Caco-2 (cell line): ENCODE measurements at regions of chr11 and their contacts with region 1.

Region 1: GRCh38 chr11:89625171-89625570 is 84.9 kb upstream of the TRIM77 start:
- DNase-seq: peak in 1 of 2 experiments; percentile 21
- H3K4me3 ChIP-seq: no peak overlapping the region
- H3K4me3 Mint-ChIP-seq: no peak overlapping the region
- H3K27ac Mint-ChIP-seq: no peak overlapping the region
- H3K4me1 ChIP-seq: no peaks in the 10 kb centered on the region
- H3K4me1 Mint-ChIP-seq: no peaks in the 10 kb centered on the region
- H3K27me3 ChIP-seq: no peaks in the 10 kb centered on the region
- H3K27me3 Mint-ChIP-seq: peaks cover 2% of the 10 kb centered on the region
- CTCF ChIP-seq: peak; percentile 39 to 50

Region 2: GRCh38 chr11:89458716-89459115 is 166.5 kb before region 1 on chr11:
- CTCF ChIA-PET with region 1: no interaction called
- POLR2A ChIA-PET with region 1: no interaction called
- intact Hi-C with region 1: no loop called
- DNase-seq: no peak
- H3K4me3 ChIP-seq: no peak overlapping the region
- H3K4me3 Mint-ChIP-seq: no peak overlapping the region
- H3K27ac Mint-ChIP-seq: no peak overlapping the region
- H3K4me1 ChIP-seq: no peaks in the 10 kb centered on the region
- H3K4me1 Mint-ChIP-seq: no peaks in the 10 kb centered on the region
- H3K27me3 ChIP-seq: no peaks in the 10 kb centered on the region
- H3K27me3 Mint-ChIP-seq: peaks cover 8% of the 10 kb centered on the region
- CTCF ChIP-seq: no peak

Region 3: GRCh38 chr11:89529626-89530380 is 95.4 kb before region 1 on chr11:
- CTCF ChIA-PET with region 1: no interaction called
- POLR2A ChIA-PET with region 1: no interaction called
- intact Hi-C with region 1: no loop called
- DNase-seq: no peak
- H3K4me3 ChIP-seq: no peak overlapping the region
- H3K4me3 Mint-ChIP-seq: no peak overlapping the region
- H3K27ac Mint-ChIP-seq: no peak overlapping the region
- H3K4me1 ChIP-seq: no peaks in the 10 kb centered on the region
- H3K4me1 Mint-ChIP-seq: peaks cover 7% of the 10 kb centered on the region
- H3K27me3 ChIP-seq: no peaks in the 10 kb centered on the region
- H3K27me3 Mint-ChIP-seq: no peaks in the 10 kb centered on the region
- CTCF ChIP-seq: no peak

Region 4: DNA sequence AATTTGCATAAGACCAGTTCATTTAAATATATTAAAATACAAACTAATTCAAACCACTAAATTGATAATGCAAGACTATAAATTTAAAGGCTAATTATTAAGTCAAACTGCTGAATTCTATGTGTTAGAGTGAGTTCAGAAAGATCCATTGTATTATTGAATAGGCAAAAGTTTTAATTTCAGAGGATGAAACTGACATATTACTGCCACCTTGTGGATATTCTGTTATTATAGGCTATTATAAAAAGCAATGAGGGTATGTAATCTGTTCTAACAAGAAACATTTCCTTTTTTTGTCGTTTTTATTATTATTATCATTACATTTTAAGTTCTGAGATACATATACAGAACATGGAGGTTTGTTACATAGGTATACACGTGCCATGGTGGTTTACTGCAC is 488.4 kb after region 1 on chr11:
- CTCF ChIA-PET with region 1: no interaction called
- POLR2A ChIA-PET with region 1: no interaction called
- intact Hi-C with region 1: loop called (anchors 1 kb)
- DNase-seq: peak in 1 of 2 experiments; percentile 26
- H3K4me3 ChIP-seq: no peak overlapping the region
- H3K4me3 Mint-ChIP-seq: no peak overlapping the region
- H3K27ac Mint-ChIP-seq: no peak overlapping the region
- H3K4me1 ChIP-seq: no peaks in the 10 kb centered on the region
- H3K4me1 Mint-ChIP-seq: peaks cover 11% of the 10 kb centered on the region
- H3K27me3 ChIP-seq: no peaks in the 10 kb centered on the region
- H3K27me3 Mint-ChIP-seq: no peaks in the 10 kb centered on the region
- CTCF ChIP-seq: peak; percentile 28 to 53

Region 5: DNA sequence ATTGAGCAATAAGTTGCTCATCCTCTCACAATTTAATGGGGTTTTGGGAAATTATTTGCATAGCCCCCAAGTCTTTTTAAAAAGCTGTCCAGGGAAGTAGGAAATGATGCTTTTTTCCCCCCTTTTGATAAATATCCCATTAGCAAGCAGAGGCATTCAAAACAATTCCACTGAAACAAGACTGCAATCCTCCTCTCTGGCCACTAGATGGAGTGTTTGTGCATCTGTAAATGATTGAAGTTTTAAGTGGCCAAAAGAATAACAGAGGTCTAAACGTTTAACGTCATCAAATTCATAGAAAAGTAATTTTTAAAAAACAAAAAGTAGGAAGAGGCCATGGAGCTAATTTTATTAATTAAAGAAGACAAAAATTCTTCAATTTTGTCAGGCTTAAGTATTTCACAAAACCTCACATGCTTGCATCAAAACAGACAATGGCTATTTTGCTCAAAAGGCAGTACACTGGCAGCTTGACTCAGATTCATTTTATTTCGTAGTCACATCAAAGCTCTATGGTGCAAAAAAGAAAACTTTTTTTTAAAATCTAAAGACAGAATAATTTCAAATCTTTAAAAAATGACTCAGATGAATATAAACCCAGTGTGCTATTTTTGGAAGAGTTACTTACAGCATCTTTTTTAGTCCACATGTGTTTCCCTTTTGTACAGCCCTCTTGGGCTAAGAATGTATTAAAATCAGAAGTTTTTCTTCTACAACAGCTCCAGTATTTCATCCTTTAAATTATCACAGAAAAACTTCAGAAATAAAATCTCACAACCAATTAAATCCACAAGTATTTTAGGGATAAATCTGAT is 579.9 kb after region 1 on chr11:
- CTCF ChIA-PET with region 1: no interaction called
- POLR2A ChIA-PET with region 1: no interaction called
- intact Hi-C with region 1: no loop called
- DNase-seq: peak in 1 of 2 experiments; percentile 63
- H3K4me3 ChIP-seq: no peak overlapping the region
- H3K4me3 Mint-ChIP-seq: no peak overlapping the region
- H3K27ac Mint-ChIP-seq: peak overlapping the region; percentile 28
- H3K4me1 ChIP-seq: no peaks in the 10 kb centered on the region
- H3K4me1 Mint-ChIP-seq: peaks cover 7% of the 10 kb centered on the region
- H3K27me3 ChIP-seq: no peaks in the 10 kb centered on the region
- H3K27me3 Mint-ChIP-seq: no peaks in the 10 kb centered on the region
- CTCF ChIP-seq: peak; percentile 94 to 97